Transverse colon (tissue), 4 donors: ENCODE measurements at regions of chr3 and their contacts with region 1.

Region 1: DNA sequence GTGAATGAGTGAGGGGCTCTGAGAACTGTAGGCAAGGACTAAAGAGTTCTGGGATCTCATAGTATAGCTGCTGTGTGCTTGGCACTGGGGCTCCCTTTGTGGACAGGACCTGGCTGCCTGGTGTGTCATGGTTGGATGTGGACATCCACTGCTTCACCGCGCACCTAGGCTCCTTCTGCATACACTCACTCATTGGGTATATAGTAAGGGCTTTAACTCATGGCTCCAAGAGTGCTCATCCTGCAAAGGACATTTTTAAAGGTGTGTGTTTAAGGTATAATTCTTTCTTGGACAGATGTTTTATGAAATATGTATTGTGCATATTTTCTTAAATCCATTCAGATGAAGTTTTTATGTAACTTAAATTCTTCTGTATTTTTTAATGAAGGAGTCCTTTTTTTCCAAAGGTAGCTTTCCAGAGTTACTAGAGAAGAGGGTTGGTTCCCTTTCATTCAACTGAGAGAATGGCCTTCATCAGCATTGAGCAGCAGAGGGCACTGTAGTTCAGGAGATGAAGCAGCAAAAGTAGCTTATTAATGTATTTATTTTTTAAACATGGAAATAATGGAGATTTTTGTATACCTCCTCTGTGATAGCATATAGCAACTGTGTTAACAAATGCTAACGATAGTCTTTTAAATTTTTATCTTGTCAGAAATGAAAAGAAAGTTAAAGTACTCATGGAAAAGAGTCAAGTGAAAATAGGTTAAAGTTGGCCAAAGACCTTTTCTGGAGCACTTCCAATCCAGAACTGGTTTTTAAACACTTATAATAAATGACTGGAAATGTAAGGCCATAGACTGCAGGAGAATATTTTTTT is 25.2 kb downstream of the OXNAD1 start:
- DNase-seq: peak; percentile 46
- H3K4me3 ChIP-seq: no peak overlapping the region
- H3K27ac ChIP-seq: peak overlapping the region in 1 of 4 donors; percentile 7
- H3K4me1 ChIP-seq: peaks cover 0 to 6% (median 0%) of the 10 kb centered on the region in 4 donors
- H3K27me3 ChIP-seq: no peaks in the 10 kb centered on the region
- CTCF ChIP-seq: peak; percentile 52 to 63 (median 61)
- EP300 ChIP-seq: no peak
- POLR2A ChIP-seq: no peak

Region 2: DNA sequence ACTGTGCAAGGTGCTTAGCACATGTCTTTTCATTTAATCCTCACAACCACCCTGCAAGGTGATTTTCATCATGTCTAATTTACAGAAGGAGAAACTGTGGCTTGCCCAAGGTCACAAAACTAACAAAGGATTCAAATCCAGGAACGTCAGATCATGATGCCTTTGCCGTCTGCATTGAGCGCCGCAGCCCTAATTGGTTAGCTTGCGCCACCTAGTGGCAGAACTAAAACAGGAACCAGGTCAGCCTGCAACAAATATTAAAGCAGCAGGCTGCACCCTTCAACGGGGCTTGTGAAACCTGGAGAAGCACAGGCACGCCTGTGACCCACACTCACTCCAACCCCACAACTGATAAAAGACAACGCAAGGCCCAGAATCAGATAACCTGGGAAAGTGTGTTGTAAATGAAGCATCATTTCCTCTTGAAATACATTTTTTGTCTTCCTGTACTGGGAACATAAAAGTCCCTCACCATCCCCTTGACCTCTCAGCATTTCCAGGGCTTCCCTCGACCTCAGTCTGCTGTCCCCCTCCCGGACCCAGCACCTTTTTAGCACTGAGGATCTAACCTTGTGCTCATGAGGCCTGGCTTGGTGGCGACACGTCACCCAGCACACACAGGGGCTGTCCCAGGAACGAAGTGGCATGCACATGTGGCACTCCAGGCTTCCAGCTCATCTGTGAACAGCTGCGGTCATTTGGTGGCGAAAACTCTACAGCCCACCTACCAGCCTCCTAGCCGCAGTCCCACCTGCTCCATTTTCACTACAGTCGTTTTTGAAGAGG is 42.7 kb before region 1 on chr3:
- in situ Hi-C with region 1: no loop called
- intact Hi-C with region 1: no loop called
- DNase-seq: peak; percentile 82
- H3K4me3 ChIP-seq: no peak overlapping the region
- H3K27ac ChIP-seq: no peak overlapping the region
- H3K4me1 ChIP-seq: peaks cover 0 to 8% (median 0%) of the 10 kb centered on the region in 4 donors
- H3K27me3 ChIP-seq: no peaks in the 10 kb centered on the region
- CTCF ChIP-seq: peak; percentile 83 to 97 (median 94)
- EP300 ChIP-seq: no peak
- POLR2A ChIP-seq: no peak

Region 3: GRCh38 chr3:16543242-16543864 is 253.1 kb after region 1 on chr3:
- in situ Hi-C with region 1: loop called in 1 of 4 experiments (anchors 5 kb)
- intact Hi-C with region 1: no loop called
- DNase-seq: no peak
- H3K4me3 ChIP-seq: no peak overlapping the region
- H3K27ac ChIP-seq: no peak overlapping the region
- H3K4me1 ChIP-seq: no peaks in the 10 kb centered on the region
- H3K27me3 ChIP-seq: no peaks in the 10 kb centered on the region
- CTCF ChIP-seq: no peak
- EP300 ChIP-seq: no peak
- POLR2A ChIP-seq: no peak

Region 4: GRCh38 chr3:16550676-16551341 is 260.6 kb after region 1 on chr3:
- in situ Hi-C with region 1: loop called in 3 of 4 experiments (anchors 5 to 10 kb)
- intact Hi-C with region 1: loop called (anchors 1 kb)
- DNase-seq: peak; percentile 64
- H3K4me3 ChIP-seq: no peak overlapping the region
- H3K27ac ChIP-seq: no peak overlapping the region
- H3K4me1 ChIP-seq: no peaks in the 10 kb centered on the region
- H3K27me3 ChIP-seq: no peaks in the 10 kb centered on the region
- CTCF ChIP-seq: peak; percentile 79 to 87 (median 82)
- EP300 ChIP-seq: no peak
- POLR2A ChIP-seq: no peak